Left cardiac atrium (tissue), 4 donors: ENCODE measurements at regions of chr9 and their contacts with region 1.

Region 1: DNA sequence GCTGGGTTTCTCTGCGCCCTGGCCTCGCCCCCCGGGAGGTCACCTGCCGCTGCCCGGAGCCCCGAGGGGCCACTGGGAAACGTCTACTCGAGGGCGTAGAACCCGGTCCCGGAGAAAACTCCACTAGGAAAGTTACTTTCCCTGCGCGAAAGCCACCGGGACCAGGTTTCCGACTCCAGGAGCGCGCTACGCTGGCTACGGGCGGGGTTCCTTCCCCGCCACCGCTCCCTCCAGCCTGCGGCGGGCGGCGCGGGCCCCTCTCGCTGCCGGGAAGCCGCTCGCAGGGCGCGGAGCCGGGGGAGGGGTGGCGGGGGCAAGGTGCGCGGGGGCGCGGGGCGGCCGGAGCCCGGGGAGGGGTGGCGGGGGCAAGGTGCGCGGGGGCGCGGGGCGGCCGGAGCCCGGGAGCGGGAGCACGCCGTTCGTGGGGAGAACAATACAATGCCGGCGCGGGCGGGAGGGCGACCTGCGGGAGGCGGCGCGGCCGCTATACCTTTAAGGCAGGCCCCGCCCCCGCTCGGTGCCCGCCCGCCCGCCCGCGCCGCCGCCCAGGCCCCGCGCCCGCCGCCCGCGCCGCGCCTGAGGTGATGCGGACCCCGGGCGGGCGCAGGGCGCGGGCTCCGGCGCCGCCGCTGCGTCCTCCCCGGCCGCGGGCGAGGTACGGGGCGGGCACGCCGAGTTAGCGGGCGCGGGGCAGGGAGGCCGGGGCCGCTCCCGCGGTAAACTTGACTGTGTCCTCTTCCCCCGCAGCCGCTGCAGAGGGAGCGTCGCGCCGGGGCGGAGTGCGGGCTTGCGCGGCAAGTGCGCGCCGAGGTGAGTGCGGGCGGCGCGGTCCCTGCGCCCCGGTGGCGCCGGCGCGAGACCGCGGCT is 278.1 kb downstream of the AOPEP start:
- DNase-seq: peak; percentile 67
- ATAC-seq: peak; percentile 45 to 47

Region 2: GRCh38 chr9:94783102-94783664 is 221.5 kb before region 1 on chr9:
- intact Hi-C with region 1: loop called (anchors 1 to 5 kb)
- DNase-seq: peak; percentile 76
- ATAC-seq: peak; percentile 87 to 90

Region 3: GRCh38 chr9:94839398-94839797 is 165.2 kb before region 1 on chr9:
- intact Hi-C with region 1: no loop called
- DNase-seq: no peak
- ATAC-seq: no peak

Region 4: DNA sequence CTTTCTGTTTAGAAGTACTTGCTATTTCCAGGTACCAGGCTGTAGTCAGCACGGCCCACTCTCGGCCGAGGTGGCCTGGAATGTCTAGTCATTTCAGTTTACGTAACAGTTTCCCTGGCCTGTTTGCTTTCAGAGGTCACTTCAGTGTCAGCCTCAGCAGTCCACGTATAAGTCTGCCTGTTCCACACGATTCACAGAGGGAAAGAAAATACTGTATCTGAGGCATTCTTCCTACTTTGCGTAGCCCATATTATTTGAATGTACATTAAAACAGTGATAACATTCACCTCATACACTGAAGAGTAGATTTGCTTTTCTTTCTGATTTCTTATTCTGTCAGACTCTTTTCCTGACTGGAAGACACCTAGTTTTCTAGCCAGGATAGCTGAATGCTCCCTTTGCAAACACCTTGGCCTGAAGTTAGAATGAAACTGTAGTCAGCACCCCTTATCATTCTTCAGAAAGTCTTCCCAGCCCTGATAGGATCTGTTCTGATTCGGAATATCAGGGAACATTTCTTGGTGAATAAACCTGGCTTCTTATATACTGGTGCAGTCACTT is 137.3 kb before region 1 on chr9:
- intact Hi-C with region 1: loop called (anchors 2 to 5 kb)
- DNase-seq: peak; percentile 72
- ATAC-seq: peak; percentile 75 to 82

Region 5: DNA sequence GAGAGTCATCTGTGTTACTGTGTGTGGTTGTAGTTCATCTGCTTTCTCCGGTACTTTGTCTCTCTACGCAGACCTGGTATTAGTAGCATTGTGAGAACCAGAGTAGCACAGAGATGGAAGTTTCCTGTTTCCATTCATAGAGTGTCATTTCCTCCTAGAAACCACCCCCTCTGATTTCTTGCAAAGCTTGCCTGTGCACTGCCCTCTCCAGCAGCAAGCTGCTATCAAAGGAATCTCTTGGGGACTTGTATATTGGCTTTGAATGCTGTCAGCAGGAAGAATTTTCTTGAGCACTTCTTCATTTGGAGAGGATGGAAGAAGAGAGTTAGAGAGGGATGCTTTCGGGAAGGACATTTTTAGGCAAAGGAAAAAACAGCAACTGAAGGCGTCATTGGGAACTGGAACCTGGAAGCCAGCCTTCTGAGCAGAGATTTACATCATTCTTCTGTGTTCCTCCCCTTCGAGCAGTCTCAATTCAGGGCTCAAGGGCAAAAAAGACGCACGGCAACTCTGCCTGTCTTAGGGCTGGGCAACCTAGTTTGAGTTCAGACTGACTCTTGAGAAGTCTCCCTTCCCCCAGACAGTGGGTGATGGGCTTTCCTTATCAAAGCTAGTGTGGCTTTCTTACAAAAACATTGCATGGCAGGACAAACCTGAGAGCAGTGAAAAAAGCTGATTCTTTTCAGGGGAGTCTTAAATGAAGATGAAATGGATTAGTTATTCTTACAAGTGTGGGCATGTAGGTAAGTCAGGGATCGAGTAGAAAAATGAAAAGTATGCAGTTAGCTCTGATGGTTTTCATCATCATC is 51.9 kb before region 1 on chr9:
- intact Hi-C with region 1: loop called (anchors 5 to 10 kb)
- DNase-seq: peak; percentile 39
- ATAC-seq: peak; percentile 53 to 58

Region 6: GRCh38 chr9:95025213-95026147 is 20.8 kb after region 1 on chr9:
- intact Hi-C with region 1: loop called in 1 of 2 experiments (anchors 2 kb)
- DNase-seq: peak; percentile 76
- ATAC-seq: peak; percentile 83 to 84